Activated CD4-positive, alpha-beta memory T cell treated with anti-CD3 and anti-CD28 coated beads for 36 hours (primary cell): ENCODE measurements at regions of chr17 and their contacts with region 1.

Region 1: DNA sequence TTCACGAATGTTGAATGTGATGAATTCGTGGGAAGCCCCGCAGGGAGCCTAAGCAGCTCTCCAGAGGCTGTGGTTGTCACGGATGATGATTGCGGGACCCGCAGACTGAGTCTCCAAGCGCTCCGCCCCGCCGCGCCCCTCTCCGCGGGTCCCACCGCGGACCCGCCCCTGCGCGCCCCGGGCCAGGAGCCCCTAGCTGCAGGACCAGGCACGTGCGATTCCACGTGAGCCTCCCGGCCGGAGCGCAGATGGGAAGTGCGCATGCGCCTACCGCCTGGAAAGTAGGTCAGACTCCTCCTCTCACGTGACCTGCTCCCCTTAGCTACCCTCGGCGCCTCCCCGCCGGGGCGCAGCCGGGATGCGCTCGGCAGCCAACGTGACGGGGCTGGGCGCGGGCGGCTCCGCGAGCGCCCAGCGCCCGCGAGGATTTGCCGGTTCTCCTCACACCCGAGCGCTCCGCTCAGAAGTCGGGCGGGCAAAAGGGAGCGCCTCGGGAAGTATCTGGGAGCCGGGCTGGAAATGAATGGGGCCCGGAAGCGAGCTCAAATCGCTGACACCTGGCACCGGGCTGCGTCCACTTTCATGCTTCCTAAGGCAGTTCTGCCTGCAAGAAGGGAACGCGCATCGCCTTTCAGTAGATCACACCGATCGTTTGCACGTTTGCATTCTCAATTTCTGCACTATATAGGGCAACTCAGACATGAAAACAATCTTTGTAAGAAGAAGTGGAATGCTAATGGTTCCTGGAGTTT is 26.4 kb upstream of the HLF start:
- DNase-seq: peak; percentile 91
- H3K4me3 Mint-ChIP-seq: peak overlapping the region; percentile 81
- H3K27ac Mint-ChIP-seq: no peak overlapping the region
- H3K4me1 Mint-ChIP-seq: peaks cover 16% of the 10 kb centered on the region
- H3K27me3 Mint-ChIP-seq: peaks cover 12% of the 10 kb centered on the region

Region 2: DNA sequence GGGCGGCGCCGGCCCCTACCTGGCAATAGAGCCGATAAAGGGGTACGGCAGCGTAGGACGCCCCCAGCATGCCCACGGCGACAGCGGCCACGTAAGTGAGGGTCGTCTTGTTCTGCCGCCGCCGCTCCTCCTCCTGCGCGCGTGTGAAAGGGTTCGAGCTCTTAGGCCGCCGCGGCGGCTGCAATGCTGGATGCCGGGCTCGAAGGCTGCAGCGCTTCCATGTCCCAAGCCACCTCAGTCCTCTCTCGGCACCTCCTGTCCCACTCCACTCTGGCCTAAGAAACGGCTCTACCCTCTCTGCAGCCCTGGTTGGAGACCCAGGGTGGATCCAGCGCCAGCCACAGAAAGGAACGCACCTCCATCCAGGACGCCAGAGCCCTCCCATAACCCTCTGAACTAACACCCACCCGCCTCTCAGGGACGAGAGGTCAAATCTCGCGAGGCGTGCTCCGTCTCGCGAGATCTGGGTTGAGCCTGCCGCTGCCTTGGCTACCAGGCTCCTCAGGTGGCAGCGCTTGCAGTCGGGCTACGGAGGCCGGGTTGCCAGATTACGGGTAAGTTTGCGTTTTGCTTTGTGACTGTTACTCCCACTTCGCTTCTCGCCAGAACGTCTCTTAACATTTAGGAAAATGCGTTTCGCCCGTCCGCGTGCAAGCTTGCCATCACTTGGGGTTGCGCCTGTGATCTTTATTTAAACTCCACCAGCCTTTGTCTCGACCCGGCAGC is 269.9 kb before region 1 on chr17 and contains the starts of genes COX11 and STXBP4:
- CTCF ChIA-PET with region 1: no interaction called
- POLR2A ChIA-PET with region 1: no interaction called
- intact Hi-C with region 1: loop called (anchors 2 kb)
- DNase-seq: peak; percentile 97
- H3K4me3 Mint-ChIP-seq: no peak within 1 kb of the TSS
- H3K27ac Mint-ChIP-seq: no peak within 1 kb of the TSS
- H3K4me1 Mint-ChIP-seq: peaks cover 23% of the 10 kb centered on the region
- H3K27me3 Mint-ChIP-seq: no peaks in the 10 kb centered on the region
- total RNA-seq, gene COX11: 44.2 to 49.9 TPM
- total RNA-seq, gene STXBP4: 3.2 to 4.3 TPM

Region 3: GRCh38 chr17:55090079-55090492 is 148.3 kb before region 1 on chr17:
- CTCF ChIA-PET with region 1: no interaction called
- POLR2A ChIA-PET with region 1: interaction called, 3 read pairs
- intact Hi-C with region 1: loop called (anchors 1 kb)
- DNase-seq: peak; percentile 76
- H3K4me3 Mint-ChIP-seq: no peak overlapping the region
- H3K27ac Mint-ChIP-seq: peak overlapping the region; percentile 80
- H3K4me1 Mint-ChIP-seq: peaks cover 26% of the 10 kb centered on the region
- H3K27me3 Mint-ChIP-seq: no peaks in the 10 kb centered on the region

Region 4: GRCh38 chr17:55314784-55315491 is 76.6 kb after region 1 on chr17:
- CTCF ChIA-PET with region 1: no interaction called
- POLR2A ChIA-PET with region 1: no interaction called
- intact Hi-C with region 1: loop called (anchors 2 kb)
- DNase-seq: peak; percentile 56
- H3K4me3 Mint-ChIP-seq: peak overlapping the region; percentile 18
- H3K27ac Mint-ChIP-seq: peak overlapping the region; percentile 77
- H3K4me1 Mint-ChIP-seq: peaks cover 21% of the 10 kb centered on the region
- H3K27me3 Mint-ChIP-seq: peaks cover 4% of the 10 kb centered on the region

Region 5: GRCh38 chr17:55348749-55349354 is 110.5 kb after region 1 on chr17:
- CTCF ChIA-PET with region 1: interaction called, 12 read pairs
- POLR2A ChIA-PET with region 1: interaction called, 3 read pairs
- intact Hi-C with region 1: loop called (anchors 1 kb)
- DNase-seq: peak; percentile 58
- H3K4me3 Mint-ChIP-seq: no peak overlapping the region
- H3K27ac Mint-ChIP-seq: no peak overlapping the region
- H3K4me1 Mint-ChIP-seq: peaks cover 33% of the 10 kb centered on the region
- H3K27me3 Mint-ChIP-seq: peaks cover 2% of the 10 kb centered on the region